Sciatic nerve (tissue), 2 donors: ENCODE measurements at regions of chr15 and their contacts with region 1.

Region 1: GRCh38 chr15:98311566-98312188 is 336.7 kb upstream of the IGF1R start:
- DNase-seq: peak; percentile 92
- ATAC-seq: peak; percentile 75

Region 2: DNA sequence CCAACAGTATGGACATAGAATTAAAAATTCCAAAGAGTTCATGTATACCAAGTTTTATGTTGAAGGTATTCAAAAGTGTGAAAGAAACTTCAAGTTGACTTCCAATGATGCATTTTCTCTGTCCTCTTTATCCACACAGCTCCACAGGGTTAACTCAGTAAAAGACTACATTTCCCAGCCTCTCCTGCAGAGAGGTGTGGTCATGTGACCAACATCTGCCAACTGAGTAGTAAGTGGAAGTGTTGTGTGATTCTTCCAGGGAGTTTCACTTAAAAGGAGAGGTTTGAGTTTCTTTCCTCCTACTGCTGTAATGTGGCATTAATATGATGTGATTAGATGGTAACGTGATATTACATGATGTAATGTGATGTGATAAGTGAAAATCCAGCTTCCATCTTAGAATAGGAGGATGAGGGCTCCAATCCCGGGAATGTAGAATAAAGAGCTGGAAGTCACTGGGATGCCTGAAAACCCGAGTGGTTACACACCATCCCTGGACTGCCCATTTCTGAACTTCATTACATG is 70.6 kb before region 1 on chr15:
- intact Hi-C with region 1: no loop called
- DNase-seq: no peak
- ATAC-seq: no peak

Region 3: GRCh38 chr15:98286831-98287230 is 24.8 kb before region 1 on chr15:
- intact Hi-C with region 1: no loop called
- DNase-seq: no peak
- ATAC-seq: no peak

Region 4: DNA sequence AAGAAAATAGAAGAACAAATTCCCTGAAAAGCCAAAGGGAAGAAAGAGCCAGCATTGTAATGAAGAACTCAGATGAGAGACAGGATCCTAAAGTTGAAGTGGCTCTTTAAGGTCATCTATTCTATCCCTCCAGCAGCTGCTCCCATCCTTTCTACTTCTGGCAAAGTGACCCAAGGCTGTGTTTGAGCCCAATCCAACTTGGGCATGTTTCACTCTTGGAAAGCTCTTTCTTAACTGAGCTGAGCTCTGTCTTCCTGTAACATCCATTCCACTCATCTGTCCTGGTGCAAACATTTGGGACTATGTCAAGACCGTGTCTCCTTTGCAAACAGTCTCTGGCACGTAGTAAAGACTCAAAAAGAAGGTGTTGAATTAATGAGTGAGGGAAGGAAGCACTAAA is 38.6 kb after region 1 on chr15:
- intact Hi-C with region 1: loop called (anchors 1 kb)
- DNase-seq: no peak
- ATAC-seq: no peak

Region 5: GRCh38 chr15:98421419-98422129 is 109.9 kb after region 1 on chr15:
- intact Hi-C with region 1: loop called (anchors 5 kb)
- DNase-seq: peak; percentile 87
- ATAC-seq: peak; percentile 86